ENCODE measurements at regions of chr6 and their contacts with region 1.

Region 1: DNA sequence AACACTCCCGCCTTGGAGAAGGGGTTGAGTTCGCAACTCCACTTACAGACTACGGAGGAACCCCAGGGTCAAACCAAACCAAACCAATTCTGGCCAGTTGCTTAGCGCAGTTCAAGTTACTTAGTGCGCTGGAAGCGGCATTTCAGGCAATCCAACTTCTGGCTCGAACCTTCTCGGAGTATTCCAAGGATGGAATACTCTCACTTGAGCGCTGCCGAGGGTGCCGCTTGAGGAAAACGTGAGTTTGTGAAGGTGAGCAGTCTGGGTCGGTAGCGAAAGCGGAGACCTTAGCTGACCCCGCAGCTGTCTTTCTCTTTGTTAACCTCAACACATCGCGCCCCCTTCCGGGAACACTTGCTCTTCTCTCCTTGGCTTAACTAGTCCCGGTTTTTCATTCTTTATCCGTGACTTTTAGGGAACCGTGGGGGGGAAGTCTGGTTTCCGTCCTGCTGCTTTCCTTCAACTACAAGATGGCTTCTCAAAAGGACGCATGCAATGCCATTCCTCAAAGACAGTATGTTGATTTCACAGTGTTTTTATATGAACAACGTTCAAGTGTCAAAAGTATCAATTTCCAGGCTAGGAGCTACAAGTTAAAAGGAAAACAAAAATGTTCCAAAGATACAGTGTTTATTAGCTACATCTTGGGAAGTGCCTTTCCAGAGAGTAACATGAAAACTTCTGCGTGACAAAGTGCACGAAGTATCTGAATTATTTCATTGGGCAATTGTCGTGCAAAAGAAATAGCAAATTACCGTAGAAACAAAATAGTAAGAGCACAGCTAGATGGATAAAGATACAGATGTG is 742 bp upstream of the PNISR start:
- DNase-seq: peak; percentile 46
- H3K4me3 Mint-ChIP-seq: peak overlapping the region; percentile 94
- H3K27ac Mint-ChIP-seq: peak overlapping the region; percentile 100
- H3K4me1 Mint-ChIP-seq: peaks cover 59% of the 10 kb centered on the region
- H3K27me3 Mint-ChIP-seq: no peaks in the 10 kb centered on the region

Region 2: DNA sequence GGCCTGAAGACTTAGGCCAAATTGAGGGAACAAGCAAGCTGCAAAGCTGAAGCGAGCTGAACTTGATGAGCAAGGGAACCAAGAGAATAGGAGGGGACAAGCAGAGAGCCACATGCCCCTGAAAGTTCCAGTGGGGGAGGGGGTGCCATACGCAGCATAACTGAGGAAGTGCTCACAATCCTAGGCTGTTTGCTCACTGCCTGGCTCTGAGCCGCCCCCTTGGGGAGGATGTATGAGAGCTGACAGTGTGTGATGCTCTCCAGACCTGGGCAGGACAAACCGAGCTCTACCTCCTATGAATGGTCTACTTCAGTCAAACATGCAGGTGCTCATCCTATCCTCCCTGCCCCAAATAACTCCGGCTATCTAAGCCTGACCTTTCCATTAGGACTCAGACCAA is 128.4 kb before region 1 on chr6:
- intact Hi-C with region 1: no loop called
- DNase-seq: no peak
- H3K4me3 Mint-ChIP-seq: no peak overlapping the region
- H3K27ac Mint-ChIP-seq: no peak overlapping the region
- H3K4me1 Mint-ChIP-seq: no peaks in the 10 kb centered on the region
- H3K27me3 Mint-ChIP-seq: peaks cover 12% of the 10 kb centered on the region

Region 3: GRCh38 chr6:99330159-99330558 is 95.7 kb before region 1 on chr6:
- intact Hi-C with region 1: loop called (anchors 1 kb)
- DNase-seq: peak; percentile 38
- H3K4me3 Mint-ChIP-seq: no peak overlapping the region
- H3K27ac Mint-ChIP-seq: no peak overlapping the region
- H3K4me1 Mint-ChIP-seq: peaks cover 11% of the 10 kb centered on the region
- H3K27me3 Mint-ChIP-seq: peaks cover 10% of the 10 kb centered on the region

Region 4: GRCh38 chr6:99393698-99394531 is 31.9 kb before region 1 on chr6 and contains the start of gene COQ3:
- intact Hi-C with region 1: loop called (anchors 1 kb)
- DNase-seq: peak; percentile 56
- H3K4me3 Mint-ChIP-seq: peak within 1 kb of the TSS; percentile 94
- H3K27ac Mint-ChIP-seq: peak within 1 kb of the TSS; percentile 88
- H3K4me1 Mint-ChIP-seq: peaks cover 11% of the 10 kb centered on the region
- H3K27me3 Mint-ChIP-seq: no peaks in the 10 kb centered on the region
- total RNA-seq, gene COQ3: 13.5 and 16.7 TPM in 2 replicates

Region 5: GRCh38 chr6:99568103-99568933 is 142.5 kb after region 1 on chr6 and contains the start of gene CCNC:
- intact Hi-C with region 1: loop called (anchors 1 kb)
- DNase-seq: peak; percentile 85
- H3K4me3 Mint-ChIP-seq: peak within 1 kb of the TSS; percentile 99
- H3K27ac Mint-ChIP-seq: peak within 1 kb of the TSS; percentile 95
- H3K4me1 Mint-ChIP-seq: peaks cover 37% of the 10 kb centered on the region
- H3K27me3 Mint-ChIP-seq: no peaks in the 10 kb centered on the region
- total RNA-seq, gene CCNC: 51.3 and 54.0 TPM in 2 replicates